Ascending aorta (tissue), 2 donors: ENCODE measurements at regions of chr1 and their contacts with region 1.

Region 1: DNA sequence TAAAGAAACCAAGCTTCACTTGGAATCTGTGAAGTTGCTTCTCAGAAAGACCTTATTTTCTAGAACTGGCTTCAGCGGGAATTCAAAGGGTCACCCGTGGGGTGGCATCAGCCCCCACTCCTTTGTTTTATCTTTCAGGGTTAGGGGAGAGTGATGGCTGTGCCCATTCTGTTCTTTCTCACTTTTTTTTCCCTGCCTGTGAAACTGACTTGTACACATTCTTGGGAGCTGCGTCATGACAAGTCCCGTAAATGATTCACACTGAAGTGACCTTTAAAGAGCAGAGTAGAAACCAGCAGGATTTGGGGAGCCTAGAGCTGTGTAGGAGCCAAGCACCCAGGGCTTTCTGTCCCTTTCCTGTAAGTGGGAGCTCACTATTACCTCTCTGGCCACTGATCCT is 43.8 kb downstream of the SLC44A3 start:
- DNase-seq: peak; percentile 21 to 89
- H3K4me3 ChIP-seq: peak overlapping the region in 1 of 2 donors; percentile 22
- H3K27ac ChIP-seq: peak overlapping the region; percentile 94
- H3K4me1 ChIP-seq: peaks cover 14 to 57% of the 10 kb centered on the region in 2 donors
- H3K27me3 ChIP-seq: no peaks in the 10 kb centered on the region
- CTCF ChIP-seq: no peak

Region 2: GRCh38 chr1:94727846-94728715 is 135.8 kb before region 1 on chr1:
- intact Hi-C with region 1: no loop called
- DNase-seq: peak in 1 of 2 donors; percentile 78
- H3K4me3 ChIP-seq: no peak overlapping the region
- H3K27ac ChIP-seq: no peak overlapping the region
- H3K4me1 ChIP-seq: peaks cover 0 to 8% of the 10 kb centered on the region in 2 donors
- H3K27me3 ChIP-seq: no peaks in the 10 kb centered on the region
- CTCF ChIP-seq: no peak

Region 3: DNA sequence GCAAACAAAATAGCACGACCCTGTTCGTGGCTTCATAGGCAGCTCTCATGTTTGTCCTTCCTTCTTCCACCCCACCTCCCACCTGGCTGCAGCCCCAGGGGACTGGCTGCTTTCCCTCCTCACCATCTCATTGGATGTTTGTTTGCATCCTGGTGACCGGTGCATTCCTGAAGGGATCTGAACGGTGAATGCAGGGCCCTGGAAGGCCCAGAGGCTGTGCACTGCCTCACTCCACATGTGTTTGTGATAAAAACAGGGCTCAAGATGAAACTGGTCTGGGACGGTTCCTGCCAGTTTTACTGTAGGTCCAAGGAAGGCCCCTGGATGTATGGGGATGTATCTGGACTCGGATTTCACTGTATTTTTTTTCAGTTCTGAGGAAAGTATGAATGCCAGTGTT is 20.2 kb after region 1 on chr1:
- intact Hi-C with region 1: loop called (anchors 1 kb)
- DNase-seq: no peak
- H3K4me3 ChIP-seq: peak overlapping the region in 1 of 2 donors; percentile 30
- H3K27ac ChIP-seq: peak overlapping the region; percentile 61 to 69
- H3K4me1 ChIP-seq: peaks cover 7 to 11% of the 10 kb centered on the region in 2 donors
- H3K27me3 ChIP-seq: no peaks in the 10 kb centered on the region
- CTCF ChIP-seq: no peak

Region 4: DNA sequence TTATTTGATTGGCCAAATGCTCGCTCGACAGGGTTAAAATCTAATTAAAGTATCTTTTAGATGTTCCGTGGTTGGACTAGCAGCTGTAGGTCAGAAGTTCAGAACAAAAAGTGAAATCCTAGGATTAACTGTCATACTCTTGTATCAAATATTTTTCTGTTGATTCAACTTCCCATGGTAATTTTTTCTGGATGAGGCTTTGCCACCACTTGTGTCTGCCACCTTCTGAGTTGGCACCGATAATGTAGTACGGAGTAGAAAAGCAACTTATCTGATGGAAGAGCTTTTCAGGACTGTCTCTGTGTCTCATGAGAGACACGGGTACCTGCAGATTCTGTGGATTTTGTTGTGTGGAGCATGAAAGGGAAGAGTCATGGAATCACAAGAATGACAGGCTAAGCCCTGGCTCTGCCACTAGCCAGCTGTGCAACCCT is 107.6 kb after region 1 on chr1:
- intact Hi-C with region 1: loop called (anchors 5 kb)
- DNase-seq: no peak
- H3K4me3 ChIP-seq: no peak overlapping the region
- H3K27ac ChIP-seq: peak overlapping the region; percentile 51 to 61
- H3K4me1 ChIP-seq: peaks cover 6 to 17% of the 10 kb centered on the region in 2 donors
- H3K27me3 ChIP-seq: no peaks in the 10 kb centered on the region
- CTCF ChIP-seq: no peak

Region 5: DNA sequence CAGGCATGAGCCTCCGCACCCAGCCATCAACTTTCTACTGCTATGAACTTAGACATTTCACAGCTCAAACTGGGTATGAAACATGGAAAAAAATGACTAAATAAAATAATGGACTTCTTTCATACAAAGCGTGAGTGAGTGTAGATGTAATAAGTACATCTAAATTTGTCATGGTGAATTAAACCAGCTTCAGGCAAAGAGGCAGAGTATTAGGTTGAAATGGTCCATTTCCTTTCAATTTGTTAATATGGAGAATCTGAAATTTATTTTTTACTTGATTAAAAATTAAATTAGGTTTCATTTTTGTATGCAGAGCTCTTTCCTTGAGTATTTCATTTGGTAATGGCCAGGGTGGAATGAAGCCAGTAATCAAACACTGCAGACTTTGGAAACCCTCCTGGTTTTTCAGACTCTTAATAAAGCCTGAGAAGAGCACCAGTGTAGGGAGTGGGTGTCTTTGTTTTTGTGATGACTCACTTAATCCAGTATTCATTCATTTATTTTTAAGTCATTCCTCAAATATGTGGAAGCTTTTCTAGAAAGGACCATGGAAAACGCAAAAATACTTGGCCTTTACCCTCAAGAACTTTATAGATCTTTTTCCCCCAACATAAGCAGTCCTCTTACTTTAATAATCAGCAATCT is 159.6 kb after region 1 on chr1:
- intact Hi-C with region 1: loop called (anchors 5 kb)
- DNase-seq: no peak
- H3K4me3 ChIP-seq: peak overlapping the region in 1 of 2 donors; percentile 17
- H3K27ac ChIP-seq: peak overlapping the region; percentile 78 to 85
- H3K4me1 ChIP-seq: peaks cover 3 to 27% of the 10 kb centered on the region in 2 donors
- H3K27me3 ChIP-seq: no peaks in the 10 kb centered on the region
- CTCF ChIP-seq: no peak

Region 6: DNA sequence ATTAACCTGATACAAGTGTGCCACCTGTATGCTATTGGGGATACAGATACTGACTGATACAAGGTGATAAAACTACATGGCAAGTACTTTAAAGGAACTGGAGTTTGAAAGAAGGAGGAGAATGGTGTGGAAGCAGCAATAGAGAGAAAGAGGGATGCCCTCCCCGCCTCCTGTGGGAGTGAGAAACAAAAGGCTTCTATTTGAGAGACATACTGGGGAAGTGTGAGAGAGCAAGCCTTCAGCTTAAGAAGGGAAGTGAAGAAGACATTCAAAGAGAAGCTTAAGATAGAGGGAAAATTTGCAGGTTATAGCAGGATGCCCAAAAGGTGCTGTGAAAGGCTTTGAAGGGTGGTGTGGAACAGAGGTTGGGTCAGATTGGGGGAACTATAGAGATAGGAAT is 216.5 kb after region 1 on chr1:
- intact Hi-C with region 1: no loop called
- DNase-seq: no peak
- H3K4me3 ChIP-seq: no peak overlapping the region
- H3K27ac ChIP-seq: no peak overlapping the region
- H3K4me1 ChIP-seq: no peaks in the 10 kb centered on the region
- H3K27me3 ChIP-seq: no peaks in the 10 kb centered on the region
- CTCF ChIP-seq: no peak